Testis (tissue), 5 donors: ENCODE measurements at regions of chr3 and their contacts with region 1.

Region 1: DNA sequence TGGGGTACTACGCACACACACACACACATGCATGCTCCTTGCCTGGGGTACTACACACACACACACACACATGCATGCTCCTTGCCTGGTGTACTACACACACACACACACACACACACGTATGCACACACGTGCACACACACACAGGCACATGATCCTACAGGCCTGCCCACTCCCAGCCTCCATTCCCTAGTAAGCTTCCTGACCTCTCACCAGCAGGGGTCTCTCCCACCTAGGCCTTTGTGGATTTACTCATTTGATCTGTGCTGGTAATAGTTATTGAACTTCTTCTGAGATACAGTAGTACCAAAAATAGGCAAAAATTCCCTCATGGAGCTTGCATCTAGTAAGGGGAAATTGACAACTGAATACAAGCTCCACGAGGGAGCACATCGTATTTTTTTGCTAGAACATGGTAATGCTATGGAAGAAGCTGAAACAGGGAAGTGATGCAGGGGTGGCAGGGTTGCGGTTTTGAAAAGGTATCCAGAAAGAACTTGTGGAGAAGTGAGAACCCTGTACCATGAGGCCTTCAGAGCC is 19.1 kb downstream of the TTC21A start:
- DNase-seq: peak; percentile 47
- H3K4me3 ChIP-seq: no peak overlapping the region
- H3K27ac ChIP-seq: no peak overlapping the region
- H3K4me1 ChIP-seq: no peaks in the 10 kb centered on the region
- H3K27me3 ChIP-seq: no peaks in the 10 kb centered on the region
- CTCF ChIP-seq: peak; percentile 24 to 37 (median 36)
- POLR2A ChIP-seq: no peak

Region 2: GRCh38 chr3:39189959-39190269 is 63.3 kb after region 1 on chr3:
- intact Hi-C with region 1: loop called (anchors 10 kb)
- DNase-seq: peak; percentile 59
- H3K4me3 ChIP-seq: no peak overlapping the region
- H3K27ac ChIP-seq: no peak overlapping the region
- H3K4me1 ChIP-seq: no peaks in the 10 kb centered on the region
- H3K27me3 ChIP-seq: no peaks in the 10 kb centered on the region
- CTCF ChIP-seq: peak; percentile 51 to 75 (median 69)
- POLR2A ChIP-seq: no peak

Region 3: GRCh38 chr3:39288300-39288808 is 161.8 kb after region 1 on chr3:
- intact Hi-C with region 1: loop called (anchors 5 kb)
- DNase-seq: peak; percentile 80
- H3K4me3 ChIP-seq: no peak overlapping the region
- H3K27ac ChIP-seq: no peak overlapping the region
- H3K4me1 ChIP-seq: no peaks in the 10 kb centered on the region
- H3K27me3 ChIP-seq: no peaks in the 10 kb centered on the region
- CTCF ChIP-seq: peak; percentile 51 to 72 (median 62)
- POLR2A ChIP-seq: no peak